ENCODE measurements at regions of chr5 and their contacts with region 1.

Region 1: DNA sequence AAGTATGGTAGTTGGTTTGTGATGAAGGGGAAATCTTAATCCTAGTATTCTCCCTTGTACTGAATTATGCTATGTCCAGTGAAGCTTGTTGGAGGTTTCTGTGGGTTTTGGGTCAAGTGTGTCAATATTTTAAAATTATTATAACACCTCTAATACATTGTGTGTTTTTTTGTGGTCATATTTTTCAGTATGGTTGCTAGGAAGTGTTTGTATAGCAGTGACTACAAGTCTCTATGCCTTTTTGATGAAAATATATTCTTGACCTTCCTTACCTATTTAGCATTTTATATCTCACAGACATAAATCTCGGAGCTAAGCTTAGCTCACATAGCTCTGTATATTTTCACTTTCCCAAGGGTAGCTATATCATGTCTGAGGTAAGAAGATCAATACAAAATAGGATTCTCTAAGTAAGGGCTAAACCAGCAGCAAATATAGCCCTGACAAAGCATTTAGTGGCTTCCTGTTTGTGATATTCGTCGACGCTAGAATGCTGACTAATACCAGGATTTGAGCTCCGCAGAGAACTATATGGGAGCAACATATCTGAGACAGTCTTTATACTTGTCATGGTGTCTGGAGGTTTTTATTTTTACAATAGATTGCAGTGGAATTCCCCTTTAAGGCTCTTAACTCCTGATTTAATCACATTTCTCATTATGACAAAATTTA is 82.3 kb downstream of the MACIR start:
- DNase-seq: peak; percentile 9
- H3K4me3 Mint-ChIP-seq: no peak overlapping the region
- H3K27ac Mint-ChIP-seq: no peak overlapping the region
- H3K4me1 Mint-ChIP-seq: peaks cover 2% of the 10 kb centered on the region
- H3K27me3 Mint-ChIP-seq: no peaks in the 10 kb centered on the region

Region 2: GRCh38 chr5:103356350-103357091 is 15.7 kb after region 1 on chr5:
- CTCF ChIA-PET with region 1: no interaction called
- POLR2A ChIA-PET with region 1: no interaction called
- intact Hi-C with region 1: loop called (anchors 2 kb)
- DNase-seq: no peak
- H3K4me3 Mint-ChIP-seq: no peak overlapping the region
- H3K27ac Mint-ChIP-seq: no peak overlapping the region
- H3K4me1 Mint-ChIP-seq: peaks cover 7% of the 10 kb centered on the region
- H3K27me3 Mint-ChIP-seq: peaks cover 6% of the 10 kb centered on the region